ENCODE measurements at regions of chr16 and their contacts with region 1.

Region 1: GRCh38 chr16:23803591-23804123 is 32.1 kb upstream of the PRKCB start:
- DNase-seq: peak; percentile 80
- ATAC-seq: peak; percentile 78
- H3K4me3 ChIP-seq: peak overlapping the region in 2 of 5 experiments; percentile 11 to 37
- H3K4me3 Mint-ChIP-seq: peak overlapping the region; percentile 52
- H3K27ac ChIP-seq: no peak overlapping the region
- H3K27ac Mint-ChIP-seq: peak overlapping the region; percentile 12
- H3K4me1 ChIP-seq: peaks cover 25 to 43% of the 10 kb centered on the region in 2 donors
- H3K4me1 Mint-ChIP-seq: peaks cover 35% of the 10 kb centered on the region
- H3K27me3 ChIP-seq: no peaks in the 10 kb centered on the region
- H3K27me3 Mint-ChIP-seq: no peaks in the 10 kb centered on the region
- CTCF ChIP-seq: peak; percentile 76

Region 2: DNA sequence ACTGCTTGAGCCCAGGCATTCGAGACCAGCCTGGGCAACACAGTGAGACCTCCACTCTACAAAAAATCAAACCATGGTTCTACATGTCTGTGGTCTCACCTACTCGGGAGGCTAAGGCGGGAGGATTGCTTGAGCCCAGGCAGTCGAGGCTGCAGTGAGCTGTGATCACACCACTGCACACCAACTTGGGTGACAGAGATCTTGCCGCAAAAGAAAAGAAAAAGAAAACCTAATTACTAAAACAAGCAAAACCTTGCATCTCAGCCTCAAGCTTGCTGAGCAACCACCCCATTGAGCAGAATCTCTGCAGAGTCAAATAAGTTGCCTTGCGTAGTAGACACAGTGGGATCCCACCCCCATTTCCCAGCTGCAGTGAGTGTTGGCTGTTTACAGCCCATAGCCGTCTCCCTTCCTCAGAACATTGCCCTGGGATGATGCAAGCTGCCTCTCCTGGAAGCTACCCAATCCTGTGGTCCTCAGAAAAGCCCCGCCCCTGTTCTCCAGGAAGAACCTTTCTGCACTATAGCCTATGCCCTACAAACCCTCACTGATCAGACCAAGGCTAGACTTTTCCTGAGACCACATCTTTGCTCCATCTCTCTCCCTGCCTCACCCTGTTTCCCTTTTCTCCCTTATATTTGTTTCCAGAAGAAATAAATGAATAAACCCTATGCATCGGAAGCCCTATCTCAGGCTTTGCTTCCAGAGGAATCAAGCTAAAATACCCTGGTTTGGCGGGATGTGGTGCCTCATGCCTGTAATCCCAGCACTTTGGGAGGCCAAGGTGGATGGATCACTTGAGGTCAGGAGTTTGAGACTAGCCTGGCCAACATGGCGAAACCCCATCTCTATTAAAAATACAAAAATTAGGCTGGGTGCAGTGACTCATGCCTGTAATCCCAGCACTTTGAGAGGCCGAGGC is 73.9 kb before region 1 on chr16:
- CTCF ChIA-PET with region 1: interaction called, 6 read pairs
- POLR2A ChIA-PET with region 1: no interaction called
- intact Hi-C with region 1: loop called (anchors 2 kb)
- DNase-seq: no peak
- ATAC-seq: no peak
- H3K4me3 ChIP-seq: no peak overlapping the region
- H3K4me3 Mint-ChIP-seq: no peak overlapping the region
- H3K27ac ChIP-seq: no peak overlapping the region
- H3K27ac Mint-ChIP-seq: no peak overlapping the region
- H3K4me1 ChIP-seq: peaks cover 0 to 5% of the 10 kb centered on the region in 2 donors
- H3K4me1 Mint-ChIP-seq: peaks cover 3% of the 10 kb centered on the region
- H3K27me3 ChIP-seq: peaks cover 0 to 6% (median 0%) of the 10 kb centered on the region in 4 experiments
- H3K27me3 Mint-ChIP-seq: peaks cover 15% of the 10 kb centered on the region
- CTCF ChIP-seq: no peak

Region 3: GRCh38 chr16:23781177-23781576 is 22.5 kb before region 1 on chr16:
- CTCF ChIA-PET with region 1: no interaction called
- POLR2A ChIA-PET with region 1: no interaction called
- intact Hi-C with region 1: no loop called
- DNase-seq: no peak
- ATAC-seq: no peak
- H3K4me3 ChIP-seq: no peak overlapping the region
- H3K4me3 Mint-ChIP-seq: no peak overlapping the region
- H3K27ac ChIP-seq: no peak overlapping the region
- H3K27ac Mint-ChIP-seq: no peak overlapping the region
- H3K4me1 ChIP-seq: no peaks in the 10 kb centered on the region
- H3K4me1 Mint-ChIP-seq: no peaks in the 10 kb centered on the region
- H3K27me3 ChIP-seq: peaks cover 0 to 17% (median 5%) of the 10 kb centered on the region in 4 experiments
- H3K27me3 Mint-ChIP-seq: peaks cover 38% of the 10 kb centered on the region
- CTCF ChIP-seq: no peak

Region 4: DNA sequence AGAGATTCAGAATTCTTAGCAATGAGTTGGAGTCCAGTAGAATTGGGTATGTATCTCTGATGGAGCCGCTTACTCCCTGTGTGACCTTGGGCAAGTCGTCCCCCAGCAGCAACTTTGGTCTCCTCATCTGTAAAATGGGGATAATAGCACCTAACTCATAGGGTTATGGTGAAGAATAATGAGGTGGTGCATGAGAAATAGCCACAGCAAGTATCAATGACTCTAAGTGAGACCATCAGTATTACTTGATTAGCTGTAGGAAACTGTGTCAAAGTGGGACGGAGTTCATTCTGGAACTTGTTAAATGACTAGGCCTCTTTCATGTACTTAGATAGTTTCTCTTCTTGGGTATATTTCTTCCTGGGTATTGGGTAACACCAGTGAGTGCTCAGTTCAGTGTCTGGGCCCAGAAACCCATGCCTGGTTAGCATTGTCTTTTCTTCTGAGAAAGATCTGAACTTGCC is 38.5 kb after region 1 on chr16:
- CTCF ChIA-PET with region 1: interaction called, 17 read pairs
- POLR2A ChIA-PET with region 1: interaction called, 3 read pairs
- intact Hi-C with region 1: loop called (anchors 1 kb)
- DNase-seq: no peak
- ATAC-seq: no peak
- H3K4me3 ChIP-seq: no peak overlapping the region
- H3K4me3 Mint-ChIP-seq: peak overlapping the region; percentile 42
- H3K27ac ChIP-seq: peak overlapping the region; percentile 20 to 67
- H3K27ac Mint-ChIP-seq: peak overlapping the region; percentile 85
- H3K4me1 ChIP-seq: peaks cover 71 to 75% of the 10 kb centered on the region in 2 donors
- H3K4me1 Mint-ChIP-seq: peaks cover 79% of the 10 kb centered on the region
- H3K27me3 ChIP-seq: no peaks in the 10 kb centered on the region
- H3K27me3 Mint-ChIP-seq: no peaks in the 10 kb centered on the region
- CTCF ChIP-seq: no peak

Region 5: DNA sequence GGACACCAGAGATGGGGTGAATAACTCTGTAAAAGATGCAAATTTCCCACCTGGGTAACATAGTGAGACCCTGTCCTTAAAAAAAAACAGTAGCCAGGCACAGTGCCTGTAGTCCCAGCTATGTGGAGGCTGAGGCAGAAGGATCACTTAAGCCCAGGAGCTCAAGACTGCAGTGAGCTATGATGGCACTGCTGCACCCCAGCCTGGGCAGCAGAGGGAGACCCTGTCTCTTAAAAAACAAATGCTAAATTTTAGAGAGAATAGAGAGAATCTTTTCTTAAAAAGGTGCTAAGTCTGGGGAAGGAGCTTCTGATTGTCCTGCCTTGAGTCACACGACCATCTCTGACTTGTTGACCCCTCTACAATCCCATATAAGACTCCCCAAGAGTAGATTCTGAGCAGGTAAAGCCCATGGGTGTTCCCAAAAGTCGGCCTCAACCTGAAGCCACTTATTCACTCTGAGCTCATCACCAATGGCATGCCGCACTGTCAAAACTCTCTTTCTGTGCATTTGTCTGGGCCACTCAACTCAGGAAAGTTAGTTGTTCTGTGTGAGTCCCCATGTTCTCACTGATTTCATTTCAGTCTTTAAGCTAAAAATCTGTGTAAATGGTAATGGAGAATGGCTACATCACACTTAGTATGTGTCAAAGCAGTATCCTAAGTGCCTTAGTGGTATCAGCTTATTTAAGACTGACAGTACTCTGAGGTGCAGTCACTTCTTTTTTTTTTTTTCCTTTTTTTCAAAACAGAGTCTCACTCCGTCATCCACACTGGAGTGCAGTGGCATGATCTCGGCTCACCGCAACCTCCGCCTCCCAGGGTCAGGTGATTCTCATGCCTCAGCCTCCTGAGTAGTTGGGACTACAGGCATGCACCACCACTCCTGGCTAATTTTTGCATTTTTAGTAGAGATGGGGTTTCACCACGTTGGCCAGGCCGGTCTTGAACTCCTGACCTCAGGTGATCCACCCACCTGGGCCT is 73.7 kb after region 1 on chr16:
- CTCF ChIA-PET with region 1: interaction called, 75 read pairs
- POLR2A ChIA-PET with region 1: interaction called, 3 read pairs
- intact Hi-C with region 1: loop called (anchors 5 kb)
- DNase-seq: peak; percentile 39
- ATAC-seq: peak; percentile 52
- H3K4me3 ChIP-seq: no peak overlapping the region
- H3K4me3 Mint-ChIP-seq: peak overlapping the region; percentile 2
- H3K27ac ChIP-seq: peak overlapping the region; percentile 34 to 77
- H3K27ac Mint-ChIP-seq: peak overlapping the region; percentile 93
- H3K4me1 ChIP-seq: peaks cover 82 to 94% of the 10 kb centered on the region in 2 donors
- H3K4me1 Mint-ChIP-seq: peaks cover 89% of the 10 kb centered on the region
- H3K27me3 ChIP-seq: no peaks in the 10 kb centered on the region
- H3K27me3 Mint-ChIP-seq: no peaks in the 10 kb centered on the region
- CTCF ChIP-seq: peak; percentile 34

Region 6: DNA sequence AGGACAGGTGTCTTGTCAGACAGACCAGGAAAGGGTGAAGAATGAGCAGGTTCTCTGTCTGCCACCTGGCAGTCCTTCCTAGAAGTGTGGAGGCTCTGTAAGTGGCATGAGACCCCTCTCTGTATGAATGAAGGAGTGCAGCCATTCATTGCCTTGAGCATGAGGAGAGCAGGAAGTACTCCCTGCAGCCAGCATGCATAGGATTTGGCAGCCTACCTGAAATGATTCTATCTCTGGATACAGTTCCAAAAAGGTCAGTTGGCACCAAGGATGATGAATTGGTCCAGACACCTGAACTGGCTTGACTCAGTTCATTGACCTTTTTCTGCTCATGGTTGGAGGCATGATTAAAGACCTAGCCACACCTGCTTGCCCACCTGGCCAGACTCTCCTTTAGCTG is 195.1 kb after region 1 on chr16:
- CTCF ChIA-PET with region 1: interaction called, 8 read pairs
- POLR2A ChIA-PET with region 1: interaction called, 10 read pairs
- intact Hi-C with region 1: no loop called
- DNase-seq: no peak
- ATAC-seq: no peak
- H3K4me3 ChIP-seq: no peak overlapping the region
- H3K4me3 Mint-ChIP-seq: no peak overlapping the region
- H3K27ac ChIP-seq: no peak overlapping the region
- H3K27ac Mint-ChIP-seq: peak overlapping the region; percentile 87
- H3K4me1 ChIP-seq: peaks cover 22 to 24% of the 10 kb centered on the region in 2 donors
- H3K4me1 Mint-ChIP-seq: peaks cover 62% of the 10 kb centered on the region
- H3K27me3 ChIP-seq: no peaks in the 10 kb centered on the region
- H3K27me3 Mint-ChIP-seq: no peaks in the 10 kb centered on the region
- CTCF ChIP-seq: no peak

Region 7: DNA sequence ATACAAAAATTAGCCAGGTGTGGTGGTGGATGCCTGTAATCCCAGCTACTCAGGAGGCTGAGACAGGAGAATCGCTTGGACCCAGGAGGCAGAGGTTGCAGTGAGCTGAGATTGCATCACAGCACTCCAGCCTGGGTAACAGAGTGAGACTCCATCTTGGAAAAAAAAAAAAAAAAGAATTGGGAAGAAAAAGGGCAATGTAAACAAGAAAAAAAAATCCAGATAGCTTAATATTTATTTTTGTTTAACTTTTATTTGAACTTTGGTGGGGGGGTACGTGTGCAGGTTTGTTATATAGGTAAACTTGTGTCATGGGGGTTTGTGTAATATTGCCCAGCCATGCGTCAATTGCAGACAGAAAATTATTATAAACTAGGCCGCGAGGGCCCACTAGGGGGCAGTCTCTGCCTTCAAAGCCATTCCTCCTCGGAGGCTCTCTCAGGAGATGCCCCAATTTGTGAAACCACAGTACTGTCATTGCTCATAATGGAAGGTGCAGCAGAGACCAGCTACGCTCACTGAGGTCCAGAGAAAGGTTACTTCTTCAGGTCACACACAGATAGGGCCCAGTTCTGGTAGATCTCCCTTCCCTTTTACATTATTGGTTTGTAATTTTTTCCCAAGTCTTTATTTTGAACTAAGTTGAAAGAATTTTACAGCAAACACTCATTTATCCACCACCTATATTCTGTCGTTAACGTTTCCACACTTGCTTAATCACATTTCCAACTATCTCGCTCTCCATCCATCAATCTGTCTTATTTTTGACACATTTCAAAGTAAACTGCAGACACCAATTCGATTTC is 238.4 kb after region 1 on chr16:
- CTCF ChIA-PET with region 1: interaction called, 296 read pairs
- POLR2A ChIA-PET with region 1: no interaction called
- intact Hi-C with region 1: no loop called
- DNase-seq: peak; percentile 79
- ATAC-seq: peak; percentile 76
- H3K4me3 ChIP-seq: no peak overlapping the region
- H3K4me3 Mint-ChIP-seq: no peak overlapping the region
- H3K27ac ChIP-seq: peak overlapping the region in 1 of 2 donors; percentile 34
- H3K27ac Mint-ChIP-seq: peak overlapping the region; percentile 10
- H3K4me1 ChIP-seq: no peaks in the 10 kb centered on the region
- H3K4me1 Mint-ChIP-seq: peaks cover 14% of the 10 kb centered on the region
- H3K27me3 ChIP-seq: no peaks in the 10 kb centered on the region
- H3K27me3 Mint-ChIP-seq: no peaks in the 10 kb centered on the region
- CTCF ChIP-seq: peak; percentile 87

Measured in B cell (primary cell).